K562 (cell line): ENCODE measurements at regions of chr3 and their contacts with region 1.

Region 1: DNA sequence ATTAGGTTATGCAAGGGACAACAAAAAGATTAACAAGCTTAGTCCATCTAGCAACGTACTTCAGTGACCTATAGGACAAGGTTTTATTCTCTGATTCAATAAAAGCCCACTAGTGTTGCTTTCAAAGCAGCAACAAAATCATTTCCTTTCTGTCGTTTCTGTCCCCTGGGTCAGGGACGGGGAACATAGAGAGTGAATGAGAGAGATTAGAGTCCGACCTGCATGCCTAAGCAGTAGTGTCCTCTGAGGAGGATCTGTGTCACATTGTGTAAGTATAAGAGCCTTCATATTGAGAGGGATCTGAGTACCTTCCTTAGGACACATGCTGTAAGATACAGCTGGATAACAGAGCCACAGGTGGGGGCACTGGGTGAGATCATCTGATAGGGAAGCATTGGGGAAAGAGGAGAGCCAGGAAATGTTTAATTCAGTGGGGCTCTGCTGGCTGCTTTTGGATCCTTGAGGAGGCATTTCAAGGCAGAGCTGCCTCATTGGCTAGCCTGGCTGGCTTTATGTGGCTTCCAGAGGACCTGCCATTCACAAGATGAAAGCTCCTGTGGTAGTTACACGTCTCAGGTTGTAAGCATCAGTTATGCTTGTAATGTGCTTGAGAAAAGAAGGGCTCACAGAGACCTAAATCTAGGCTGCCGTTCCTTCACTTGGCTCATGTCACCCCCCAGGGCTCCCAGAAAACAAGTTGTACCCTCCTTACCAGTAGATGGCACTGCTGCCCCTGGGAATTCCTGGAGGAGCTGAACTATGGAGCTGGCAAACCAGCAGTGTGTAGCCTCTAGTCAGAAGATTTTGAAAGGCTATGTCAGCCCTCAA is 2.7 kb downstream of the TMEM108 start:
- DNase-seq: peak; percentile 35 to 70 (median 53)
- ATAC-seq: peak; percentile 68
- H3K4me3 ChIP-seq: no peak overlapping the region
- H3K27ac ChIP-seq: no peak overlapping the region
- H3K4me1 ChIP-seq: peaks cover 5 to 16% of the 10 kb centered on the region in 2 experiments; a peak in 4 of 5 replicates
- H3K27me3 ChIP-seq: no peaks in the 10 kb centered on the region; a peak in 1 of 5 replicates
- CTCF ChIP-seq: peak; percentile 65 to 70 (median 69)
- EP300 ChIP-seq: no peak
- POLR2A ChIP-seq: no peak
- RAD21 ChIP-seq: peak; percentile 77

Region 2: DNA sequence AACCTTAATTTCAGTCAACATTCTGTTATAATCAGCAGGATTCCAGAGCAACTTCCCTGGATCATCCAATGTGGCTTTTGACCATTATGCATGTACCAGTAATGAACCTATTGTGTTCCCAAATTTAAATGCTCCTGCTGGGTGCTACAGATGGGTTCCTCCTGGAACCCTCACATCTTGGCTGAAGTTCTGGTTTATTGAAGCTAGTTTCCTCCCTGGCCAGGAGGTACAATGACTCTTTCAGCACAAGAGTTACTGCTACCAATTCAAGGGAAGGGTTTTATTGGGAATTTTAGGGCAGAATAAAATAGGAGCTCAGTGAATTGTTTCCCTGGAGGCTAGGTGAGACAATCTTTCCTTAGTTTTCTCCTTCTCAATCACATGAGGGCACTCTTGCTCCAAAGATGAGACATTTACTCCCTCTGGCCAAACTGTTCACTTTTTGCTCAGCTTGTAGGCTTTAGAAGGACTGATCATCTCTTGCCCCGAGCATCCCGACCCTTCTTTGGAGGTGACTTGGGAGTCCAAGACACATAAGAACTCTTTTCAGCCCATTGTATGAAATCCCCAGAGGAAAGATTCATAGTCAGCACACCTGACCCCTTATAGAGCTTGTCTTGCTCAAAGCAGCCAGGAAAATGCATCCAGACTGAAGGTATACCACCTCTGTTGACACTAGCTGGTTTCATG is 309.9 kb before region 1 on chr3:
- CTCF ChIA-PET with region 1: interaction called, 4 read pairs
- POLR2A ChIA-PET with region 1: interaction called, 4 read pairs
- in situ Hi-C with region 1: loop called (anchors 25 kb)
- intact Hi-C with region 1: loop called (anchors 2 kb)
- DNase-seq: peak in 2 of 4 experiments; percentile 22 to 49
- ATAC-seq: peak; percentile 87
- H3K4me3 ChIP-seq: no peak overlapping the region
- H3K27ac ChIP-seq: no peak overlapping the region
- H3K4me1 ChIP-seq: no peaks in the 10 kb centered on the region
- H3K27me3 ChIP-seq: no peaks in the 10 kb centered on the region
- CTCF ChIP-seq: peak; percentile 54 to 71 (median 55); a peak in 5 of 6 replicates
- EP300 ChIP-seq: no peak
- POLR2A ChIP-seq: no peak
- RAD21 ChIP-seq: peak; percentile 71 to 81

Region 3: GRCh38 chr3:132953683-132954082 is 87.2 kb before region 1 on chr3:
- CTCF ChIA-PET with region 1: no interaction called
- POLR2A ChIA-PET with region 1: no interaction called
- in situ Hi-C with region 1: no loop called
- intact Hi-C with region 1: no loop called
- DNase-seq: no peak
- ATAC-seq: no peak
- H3K4me3 ChIP-seq: no peak overlapping the region
- H3K27ac ChIP-seq: no peak overlapping the region
- H3K4me1 ChIP-seq: no peaks in the 10 kb centered on the region
- H3K27me3 ChIP-seq: no peaks in the 10 kb centered on the region
- CTCF ChIP-seq: no peak
- EP300 ChIP-seq: no peak
- POLR2A ChIP-seq: no peak
- RAD21 ChIP-seq: no peak

Region 4: GRCh38 chr3:133377396-133377795 is 336.5 kb after region 1 on chr3:
- CTCF ChIA-PET with region 1: interaction called, 4 read pairs
- POLR2A ChIA-PET with region 1: interaction called, 5 read pairs
- in situ Hi-C with region 1: loop called (anchors 25 kb)
- intact Hi-C with region 1: loop called (anchors 2 kb)
- DNase-seq: peak in 2 of 4 experiments; percentile 18 to 24
- ATAC-seq: peak; percentile 71
- H3K4me3 ChIP-seq: no peak overlapping the region
- H3K27ac ChIP-seq: no peak overlapping the region
- H3K4me1 ChIP-seq: no peaks in the 10 kb centered on the region; a peak in 2 of 5 replicates
- H3K27me3 ChIP-seq: no peaks in the 10 kb centered on the region; a peak in 1 of 5 replicates
- CTCF ChIP-seq: peak; percentile 30 to 53 (median 34); a peak in 3 of 6 replicates
- EP300 ChIP-seq: no peak
- POLR2A ChIP-seq: no peak
- RAD21 ChIP-seq: peak; percentile 44 to 57

Region 5: DNA sequence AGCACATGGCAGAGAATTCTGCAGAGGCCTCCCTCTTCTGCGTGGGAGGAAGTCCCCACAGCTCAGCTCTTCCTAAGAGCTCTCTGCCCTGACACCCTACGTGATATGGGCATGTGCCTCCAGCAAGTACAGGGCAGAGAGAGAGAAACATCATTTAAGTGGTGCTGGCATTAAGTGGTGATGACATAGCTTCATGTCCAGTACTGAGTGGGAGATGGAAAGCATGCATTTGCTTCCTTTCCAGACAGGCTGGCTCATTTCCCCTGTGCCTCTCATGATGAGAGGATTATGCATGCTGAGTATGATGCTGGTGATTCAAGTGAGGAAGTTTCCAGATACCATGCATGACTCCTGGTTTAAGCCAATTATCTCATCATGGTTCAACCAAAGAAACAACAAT is 385.8 kb after region 1 on chr3:
- CTCF ChIA-PET with region 1: interaction called, 4 read pairs
- POLR2A ChIA-PET with region 1: no interaction called
- in situ Hi-C with region 1: no loop called
- intact Hi-C with region 1: loop called (anchors 2 kb)
- DNase-seq: no peak
- ATAC-seq: no peak
- H3K4me3 ChIP-seq: no peak overlapping the region
- H3K27ac ChIP-seq: no peak overlapping the region
- H3K4me1 ChIP-seq: no peaks in the 10 kb centered on the region
- H3K27me3 ChIP-seq: peaks cover 0 to 4% of the 10 kb centered on the region in 2 experiments; a peak in 2 of 5 replicates
- CTCF ChIP-seq: no peak
- EP300 ChIP-seq: no peak
- POLR2A ChIP-seq: no peak
- RAD21 ChIP-seq: no peak

Region 6: GRCh38 chr3:133494469-133494868 is 453.6 kb after region 1 on chr3:
- CTCF ChIA-PET with region 1: no interaction called
- POLR2A ChIA-PET with region 1: no interaction called
- in situ Hi-C with region 1: no loop called
- intact Hi-C with region 1: no loop called
- DNase-seq: peak in 2 of 4 experiments; percentile 36 to 42
- ATAC-seq: peak; percentile 92
- H3K4me3 ChIP-seq: no peak overlapping the region
- H3K27ac ChIP-seq: no peak overlapping the region
- H3K4me1 ChIP-seq: no peaks in the 10 kb centered on the region; a peak in 1 of 5 replicates
- H3K27me3 ChIP-seq: no peaks in the 10 kb centered on the region
- CTCF ChIP-seq: peak; percentile 48 to 55 (median 54); a peak in 5 of 6 replicates
- EP300 ChIP-seq: no peak
- POLR2A ChIP-seq: no peak
- RAD21 ChIP-seq: peak in 1 of 2 experiments; percentile 54; a peak in 2 of 4 replicates